ENCODE measurements at regions of chr12 and their contacts with region 1.

Region 1: DNA sequence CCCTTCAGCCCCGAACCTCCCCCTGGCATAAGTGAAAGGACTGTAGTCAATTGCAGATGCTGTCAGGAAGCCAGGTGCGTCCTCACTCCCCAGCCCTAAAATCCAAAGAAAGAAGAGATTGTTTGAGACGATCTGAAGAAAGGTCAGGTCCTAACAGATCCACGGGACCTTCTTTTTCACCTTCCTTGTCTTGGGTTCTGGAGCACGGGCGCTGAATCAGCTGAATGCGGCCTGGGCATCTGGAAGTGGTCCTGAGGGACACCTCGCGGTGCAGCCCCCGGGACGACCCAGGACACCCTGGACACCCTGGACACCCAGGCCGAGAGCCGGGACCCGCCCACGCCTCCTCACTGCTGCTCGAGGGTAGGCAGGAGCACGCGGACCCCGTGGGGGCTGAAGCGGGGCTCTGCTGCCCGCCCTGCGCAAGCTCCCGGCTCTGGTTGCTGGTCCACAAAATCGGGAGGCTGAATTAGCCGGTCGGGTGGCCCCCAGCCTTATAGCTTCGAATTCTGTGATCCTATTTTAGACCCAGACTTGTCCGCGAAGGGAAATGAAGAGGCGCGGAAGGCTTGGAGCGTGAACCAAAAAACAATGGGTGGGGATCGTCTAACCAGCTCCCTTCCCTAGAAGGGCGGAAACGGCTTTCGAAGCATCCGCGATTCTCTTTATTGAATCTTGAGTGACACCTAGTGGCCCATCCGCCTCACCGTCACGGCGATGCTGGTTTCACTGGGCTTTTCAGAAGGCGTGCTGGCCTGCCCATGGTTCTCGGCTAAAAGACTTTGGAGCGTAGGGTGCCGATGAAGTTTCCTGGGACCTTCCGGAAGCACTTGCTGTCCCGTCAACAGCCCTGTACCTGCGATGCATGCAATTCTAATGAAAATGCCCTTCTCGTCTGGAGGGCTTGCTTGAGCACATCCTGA is 46.4 kb upstream of the PLXNC1 start:
- DNase-seq: peak; percentile 90
- H3K4me3 ChIP-seq: peak overlapping the region; percentile 46 to 68 (median 52)
- H3K27ac ChIP-seq: peak overlapping the region; percentile 43 to 65 (median 52)
- H3K4me1 ChIP-seq: peaks cover 2 to 21% (median 5%) of the 10 kb centered on the region in 4 donors
- H3K27me3 ChIP-seq: no peaks in the 10 kb centered on the region
- CTCF ChIP-seq: peak; percentile 72 to 89 (median 77)
- EP300 ChIP-seq: no peak
- POLR2A ChIP-seq: no peak

Region 2: GRCh38 chr12:92987362-92987761 is 1114.6 kb before region 1 on chr12:
- in situ Hi-C with region 1: loop called in 2 of 4 experiments (anchors 25 kb)
- intact Hi-C with region 1: no loop called
- DNase-seq: no peak
- H3K4me3 ChIP-seq: no peak overlapping the region
- H3K27ac ChIP-seq: peak overlapping the region; percentile 43 to 68 (median 48)
- H3K4me1 ChIP-seq: peaks cover 8 to 19% (median 15%) of the 10 kb centered on the region in 4 donors
- H3K27me3 ChIP-seq: no peaks in the 10 kb centered on the region
- CTCF ChIP-seq: peak; percentile 54 to 79 (median 64)
- EP300 ChIP-seq: no peak
- POLR2A ChIP-seq: no peak

Region 3: DNA sequence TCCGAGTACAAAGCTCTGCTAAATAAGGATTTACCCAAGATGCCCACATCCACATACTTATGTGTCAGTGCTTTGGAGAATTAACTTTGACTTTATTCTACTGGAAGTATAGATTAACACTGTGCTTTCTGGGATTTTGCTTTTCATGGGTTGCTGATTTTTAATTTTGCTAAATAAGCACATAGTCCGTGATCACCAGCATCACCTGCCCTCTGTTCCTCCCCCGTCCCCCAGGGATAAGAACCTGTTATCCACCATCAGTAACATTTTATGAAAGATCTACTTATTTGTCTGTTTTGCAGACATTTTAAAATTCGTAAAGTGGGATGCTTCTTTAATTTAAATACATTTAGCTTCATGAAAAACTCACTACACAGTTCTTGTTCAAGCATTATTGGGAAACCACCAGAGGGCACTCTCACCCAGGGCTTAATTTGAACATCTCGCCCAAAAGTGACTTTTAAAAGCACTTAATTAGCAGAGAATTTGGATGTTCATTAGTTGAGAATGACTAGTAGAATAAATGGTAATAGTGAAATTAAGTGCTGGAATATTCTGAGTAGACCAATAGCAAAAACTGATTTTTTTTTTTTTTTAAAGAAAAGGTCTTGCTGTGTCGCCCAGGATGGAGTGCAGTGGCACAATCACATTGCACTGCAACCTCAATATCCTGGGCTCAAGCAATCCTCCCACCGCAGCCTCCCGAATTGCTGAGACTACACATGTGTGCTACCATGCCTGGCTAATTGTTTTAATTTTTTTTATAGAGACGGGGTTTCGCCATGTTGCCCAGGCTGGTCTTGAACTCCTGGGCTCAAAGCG is 599.0 kb before region 1 on chr12:
- in situ Hi-C with region 1: loop called (anchors 5 to 10 kb)
- intact Hi-C with region 1: loop called (anchors 2 kb)
- DNase-seq: peak; percentile 43
- H3K4me3 ChIP-seq: no peak overlapping the region
- H3K27ac ChIP-seq: no peak overlapping the region
- H3K4me1 ChIP-seq: no peaks in the 10 kb centered on the region
- H3K27me3 ChIP-seq: no peaks in the 10 kb centered on the region
- CTCF ChIP-seq: peak; percentile 71 to 80 (median 74)
- EP300 ChIP-seq: no peak
- POLR2A ChIP-seq: no peak

Region 4: DNA sequence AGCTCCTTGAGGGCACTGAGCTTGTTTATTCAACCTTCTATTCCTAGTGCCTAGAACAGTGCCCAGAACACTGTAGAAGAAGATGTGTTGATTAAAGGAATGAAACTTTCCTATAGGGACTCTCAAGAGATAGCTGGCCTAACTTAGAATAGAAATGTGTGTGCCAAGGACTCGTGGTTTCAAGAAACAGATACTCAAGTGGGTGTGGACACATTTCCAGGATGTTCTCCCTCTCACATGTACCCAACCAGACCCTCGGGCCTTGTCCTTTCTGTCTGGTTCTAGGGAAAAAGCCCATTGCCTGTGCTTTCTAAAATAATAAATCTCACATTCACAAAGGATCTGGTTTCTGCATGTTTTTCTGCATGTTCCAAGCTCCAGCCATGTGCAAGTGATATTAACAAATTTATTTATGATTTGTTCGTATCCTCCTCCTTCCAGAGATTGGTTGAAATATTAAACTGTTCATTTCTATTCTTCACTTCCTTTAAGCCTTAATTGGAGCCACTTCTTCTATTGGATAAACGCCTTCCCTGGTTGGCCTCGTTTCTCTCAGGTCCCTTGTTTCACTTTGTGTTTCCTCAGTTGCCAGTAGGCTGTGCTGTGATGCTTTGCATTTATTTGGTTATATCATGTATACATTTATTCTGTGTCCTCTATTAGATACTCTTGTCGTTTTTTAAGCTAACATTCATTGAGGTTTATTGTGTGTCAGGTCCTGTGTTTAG is 335.0 kb before region 1 on chr12:
- in situ Hi-C with region 1: loop called (anchors 10 to 25 kb)
- intact Hi-C with region 1: loop called (anchors 10 kb)
- DNase-seq: peak; percentile 29
- H3K4me3 ChIP-seq: no peak overlapping the region
- H3K27ac ChIP-seq: peak overlapping the region; percentile 27 to 65 (median 46)
- H3K4me1 ChIP-seq: peaks cover 0 to 21% (median 7%) of the 10 kb centered on the region in 4 donors
- H3K27me3 ChIP-seq: no peaks in the 10 kb centered on the region
- CTCF ChIP-seq: peak; percentile 35 to 60 (median 54)
- EP300 ChIP-seq: no peak
- POLR2A ChIP-seq: no peak

Region 5: GRCh38 chr12:93778306-93778705 is 323.7 kb before region 1 on chr12:
- in situ Hi-C with region 1: loop called (anchors 10 to 25 kb)
- intact Hi-C with region 1: no loop called
- DNase-seq: no peak
- H3K4me3 ChIP-seq: no peak overlapping the region
- H3K27ac ChIP-seq: peak overlapping the region; percentile 66 to 82 (median 76)
- H3K4me1 ChIP-seq: peaks cover 10 to 37% (median 13%) of the 10 kb centered on the region in 4 donors
- H3K27me3 ChIP-seq: no peaks in the 10 kb centered on the region
- CTCF ChIP-seq: no peak
- EP300 ChIP-seq: no peak
- POLR2A ChIP-seq: no peak

Region 6: DNA sequence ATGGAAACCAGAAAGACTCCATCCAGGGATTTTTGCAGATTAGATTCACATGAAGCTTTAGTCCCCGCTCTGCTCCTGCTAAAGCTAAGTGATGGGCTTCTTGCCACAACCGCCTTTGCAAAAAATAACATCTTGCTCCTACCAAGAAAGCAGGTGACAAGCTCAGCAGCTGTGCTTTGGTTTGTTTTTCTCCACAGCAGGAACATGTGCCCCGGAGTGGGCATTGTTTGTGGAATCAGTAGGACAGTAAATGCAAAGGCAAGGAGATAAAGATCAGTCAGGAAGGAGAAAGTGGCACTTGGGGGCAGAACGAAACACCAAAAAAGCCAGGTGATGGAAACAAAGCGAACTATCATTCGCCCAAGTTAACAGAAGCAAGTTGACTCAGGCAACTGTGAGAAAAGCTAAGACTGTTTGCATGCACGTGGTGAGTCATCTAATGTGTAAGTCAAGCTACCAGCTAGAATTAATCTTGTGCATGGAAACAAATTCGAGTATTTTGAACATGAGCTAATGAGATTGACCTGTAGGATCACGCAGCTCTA is 119.2 kb before region 1 on chr12:
- in situ Hi-C with region 1: loop called in 2 of 4 experiments (anchors 10 kb)
- intact Hi-C with region 1: no loop called
- DNase-seq: no peak
- H3K4me3 ChIP-seq: no peak overlapping the region
- H3K27ac ChIP-seq: no peak overlapping the region
- H3K4me1 ChIP-seq: no peaks in the 10 kb centered on the region
- H3K27me3 ChIP-seq: no peaks in the 10 kb centered on the region
- CTCF ChIP-seq: no peak
- EP300 ChIP-seq: no peak
- POLR2A ChIP-seq: no peak

Measured in transverse colon (tissue), 4 donors.